ENCODE measurements at regions of chr11 and their contacts with region 1.

Region 1: GRCh38 chr11:46121724-46122477 is 647 bp upstream of the PHF21A start:
- DNase-seq: peak; percentile 30 to 87
- H3K4me3 ChIP-seq: peak overlapping the region; percentile 69 to 95
- H3K27ac ChIP-seq: peak overlapping the region; percentile 58 to 95
- H3K4me1 ChIP-seq: peaks cover 0 to 15% of the 10 kb centered on the region in 2 donors
- H3K27me3 ChIP-seq: no peaks in the 10 kb centered on the region
- CTCF ChIP-seq: no peak

Region 2: DNA sequence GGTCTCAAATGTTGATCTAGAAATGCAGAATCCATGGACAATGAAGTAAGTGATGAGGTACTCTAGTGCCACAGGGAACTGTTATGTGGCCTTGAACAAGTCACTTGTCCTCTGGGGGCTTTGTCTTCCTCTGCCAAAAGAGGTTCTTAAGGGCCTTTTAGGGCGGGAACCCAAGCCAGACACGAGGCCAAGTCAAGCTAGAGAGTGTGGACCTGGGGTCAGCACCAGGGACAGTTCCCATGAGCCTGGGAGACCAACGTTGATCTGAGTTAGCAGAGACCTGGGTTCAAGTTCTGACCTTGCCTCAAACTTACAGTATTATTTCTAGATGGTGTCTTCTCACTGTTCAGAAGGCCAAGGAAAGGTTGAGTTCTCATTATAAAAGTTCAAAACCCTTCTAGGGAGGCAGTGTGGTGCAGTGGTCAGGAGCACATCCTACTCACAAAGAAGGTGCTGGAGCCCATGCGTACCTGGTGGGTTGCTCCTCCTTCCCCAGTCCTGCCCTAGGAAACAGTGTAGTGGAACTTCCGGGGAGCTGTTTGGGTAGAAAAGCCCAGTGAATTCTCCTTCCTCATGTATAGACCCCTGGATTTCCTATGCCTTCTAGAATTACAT is 578.0 kb before region 1 on chr11:
- intact Hi-C with region 1: no loop called
- DNase-seq: no peak
- H3K4me3 ChIP-seq: no peak overlapping the region
- H3K27ac ChIP-seq: no peak overlapping the region
- H3K4me1 ChIP-seq: no peaks in the 10 kb centered on the region
- H3K27me3 ChIP-seq: no peaks in the 10 kb centered on the region
- CTCF ChIP-seq: no peak

Region 3: DNA sequence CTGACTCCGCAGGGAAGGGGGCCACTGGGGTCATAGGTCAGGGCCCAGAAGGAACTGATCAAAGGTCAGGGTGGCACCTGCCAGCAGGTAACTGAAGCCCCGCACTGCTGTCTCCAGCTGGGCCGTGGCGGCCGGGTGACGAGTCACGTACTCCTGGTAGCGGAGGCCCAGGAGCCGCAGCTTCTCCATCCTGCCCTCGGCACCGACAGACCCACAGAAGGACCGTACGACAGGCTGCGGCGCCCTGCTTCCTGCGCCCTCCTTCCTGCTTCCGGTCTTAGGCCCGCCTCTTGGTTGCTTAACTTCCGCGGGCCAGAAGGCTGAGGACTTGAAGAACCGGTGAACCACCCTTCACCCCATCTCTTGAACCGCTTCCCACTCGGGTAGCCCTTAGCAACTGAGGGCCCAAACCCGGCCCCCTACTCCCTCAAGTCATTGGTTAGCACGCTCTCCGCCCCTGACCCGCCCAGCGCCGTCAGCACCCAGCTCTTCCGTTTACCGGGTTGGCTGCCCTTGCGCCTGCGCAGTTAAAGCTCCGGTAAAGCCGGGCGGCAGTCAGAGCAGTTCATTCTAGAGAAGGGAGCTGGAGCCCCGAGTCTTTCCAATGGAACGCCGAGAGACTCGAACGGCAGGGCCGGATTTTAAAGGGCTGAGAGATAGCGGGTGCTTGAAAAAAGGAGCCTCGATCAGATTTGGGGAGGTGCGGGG is 204.1 kb before region 1 on chr11 and contains the start of gene PEX16:
- intact Hi-C with region 1: loop called (anchors 5 kb)
- DNase-seq: peak; percentile 93 to 99
- H3K4me3 ChIP-seq: peak within 1 kb of the TSS; percentile 67 to 91
- H3K27ac ChIP-seq: peak within 1 kb of the TSS; percentile 90 to 91
- H3K4me1 ChIP-seq: peaks cover 5 to 18% of the 10 kb centered on the region in 2 donors
- H3K27me3 ChIP-seq: peaks cover 11% of the 10 kb centered on the region
- CTCF ChIP-seq: no peak
- total RNA-seq, gene PEX16: 77.9 TPM

Region 4: GRCh38 chr11:45964911-45965389 is 157.0 kb before region 1 on chr11:
- intact Hi-C with region 1: loop called (anchors 10 kb)
- DNase-seq: peak in 1 of 2 donors; percentile 79
- H3K4me3 ChIP-seq: no peak overlapping the region
- H3K27ac ChIP-seq: peak overlapping the region; percentile 27 to 60
- H3K4me1 ChIP-seq: peaks cover 0 to 2% of the 10 kb centered on the region in 2 donors
- H3K27me3 ChIP-seq: no peaks in the 10 kb centered on the region
- CTCF ChIP-seq: peak; percentile 86 to 90 (median 90)

Region 5: DNA sequence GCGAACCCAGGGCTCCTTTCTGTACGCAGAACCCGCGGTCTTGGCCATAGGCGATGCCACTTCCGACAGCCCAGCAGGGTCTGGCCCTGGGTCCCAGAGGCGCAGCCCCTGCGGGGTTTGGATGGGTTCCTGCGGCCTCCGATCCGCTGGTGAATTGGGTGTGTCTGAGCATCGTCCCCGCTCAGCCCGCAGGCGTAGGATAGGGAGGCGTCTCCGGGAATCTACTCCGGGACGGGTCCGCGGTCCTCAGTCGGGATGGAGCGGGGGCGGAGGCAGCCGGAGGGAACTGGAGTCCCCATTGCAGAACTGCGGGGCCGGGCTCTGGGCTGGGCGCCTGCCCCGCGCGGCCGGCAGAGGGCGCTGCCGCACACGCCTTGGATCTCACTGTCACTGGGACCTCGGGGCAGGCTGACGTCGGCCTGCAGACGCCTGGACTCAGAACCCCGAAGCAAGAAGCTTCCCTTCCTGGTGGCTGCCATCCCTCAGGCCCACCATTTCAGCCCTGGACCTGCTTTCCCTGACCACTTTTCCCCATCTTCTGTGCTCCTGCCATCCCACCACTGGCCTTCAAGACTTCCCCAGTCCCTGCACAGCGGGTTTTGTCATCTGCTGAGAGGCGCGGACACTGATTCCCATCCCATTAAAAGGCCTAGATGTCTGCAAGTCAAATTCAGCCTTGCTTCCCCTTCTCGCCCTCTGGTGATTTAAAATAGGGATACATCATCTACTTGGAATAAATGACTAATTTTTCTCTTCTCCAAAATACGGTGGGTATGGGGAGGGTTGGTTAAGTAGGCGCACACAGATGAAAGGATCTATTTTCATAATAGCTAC is 117.3 kb after region 1 on chr11:
- intact Hi-C with region 1: loop called (anchors 5 kb)
- DNase-seq: peak; percentile 50 to 93
- H3K4me3 ChIP-seq: peak overlapping the region; percentile 60 to 86
- H3K27ac ChIP-seq: no peak overlapping the region
- H3K4me1 ChIP-seq: peaks cover 12 to 20% of the 10 kb centered on the region in 2 donors
- H3K27me3 ChIP-seq: no peaks in the 10 kb centered on the region
- CTCF ChIP-seq: peak; percentile 96 to 99 (median 98)

Region 6: DNA sequence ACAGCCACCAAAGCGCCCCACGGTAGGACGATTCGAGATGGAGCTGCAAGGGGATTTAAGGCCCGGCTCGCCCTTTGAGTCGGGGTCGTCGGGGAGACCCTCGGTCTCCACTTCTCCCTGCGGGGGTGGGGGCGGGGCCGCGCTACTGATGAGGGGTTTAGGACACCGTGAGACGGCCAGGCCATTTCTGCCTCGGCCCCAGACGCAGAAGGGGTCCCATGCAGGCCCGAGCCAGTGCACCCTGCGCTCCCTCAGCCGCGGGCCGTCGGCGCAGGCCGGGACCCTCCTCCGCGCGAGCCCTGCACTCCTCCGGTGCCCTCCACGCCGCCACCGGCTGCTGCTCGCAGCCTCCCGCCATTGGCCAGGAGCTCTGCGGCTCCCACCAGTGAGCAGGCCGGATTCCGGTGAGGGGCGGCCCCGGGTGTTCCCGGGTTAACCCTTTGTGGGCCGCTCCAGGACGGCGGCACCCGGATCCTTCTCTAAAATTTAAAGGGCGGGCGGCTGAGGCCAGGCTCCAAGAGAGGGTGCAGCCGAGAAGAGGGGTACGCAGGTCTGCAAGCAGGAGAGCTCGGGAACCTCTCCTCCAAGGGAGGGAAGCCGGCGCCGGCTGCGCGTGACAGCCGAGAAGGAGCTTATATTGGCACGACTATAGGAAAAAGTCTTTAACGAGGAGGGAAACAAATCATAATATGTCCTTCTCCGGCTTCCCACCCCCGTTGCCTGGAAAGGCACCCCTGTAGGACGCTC is 173.6 kb after region 1 on chr11:
- intact Hi-C with region 1: loop called (anchors 10 kb)
- DNase-seq: peak in 1 of 2 donors; percentile 84
- H3K4me3 ChIP-seq: peak overlapping the region; percentile 52 to 77
- H3K27ac ChIP-seq: no peak overlapping the region
- H3K4me1 ChIP-seq: peaks cover 7 to 27% of the 10 kb centered on the region in 2 donors
- H3K27me3 ChIP-seq: no peaks in the 10 kb centered on the region
- CTCF ChIP-seq: no peak

Region 7: DNA sequence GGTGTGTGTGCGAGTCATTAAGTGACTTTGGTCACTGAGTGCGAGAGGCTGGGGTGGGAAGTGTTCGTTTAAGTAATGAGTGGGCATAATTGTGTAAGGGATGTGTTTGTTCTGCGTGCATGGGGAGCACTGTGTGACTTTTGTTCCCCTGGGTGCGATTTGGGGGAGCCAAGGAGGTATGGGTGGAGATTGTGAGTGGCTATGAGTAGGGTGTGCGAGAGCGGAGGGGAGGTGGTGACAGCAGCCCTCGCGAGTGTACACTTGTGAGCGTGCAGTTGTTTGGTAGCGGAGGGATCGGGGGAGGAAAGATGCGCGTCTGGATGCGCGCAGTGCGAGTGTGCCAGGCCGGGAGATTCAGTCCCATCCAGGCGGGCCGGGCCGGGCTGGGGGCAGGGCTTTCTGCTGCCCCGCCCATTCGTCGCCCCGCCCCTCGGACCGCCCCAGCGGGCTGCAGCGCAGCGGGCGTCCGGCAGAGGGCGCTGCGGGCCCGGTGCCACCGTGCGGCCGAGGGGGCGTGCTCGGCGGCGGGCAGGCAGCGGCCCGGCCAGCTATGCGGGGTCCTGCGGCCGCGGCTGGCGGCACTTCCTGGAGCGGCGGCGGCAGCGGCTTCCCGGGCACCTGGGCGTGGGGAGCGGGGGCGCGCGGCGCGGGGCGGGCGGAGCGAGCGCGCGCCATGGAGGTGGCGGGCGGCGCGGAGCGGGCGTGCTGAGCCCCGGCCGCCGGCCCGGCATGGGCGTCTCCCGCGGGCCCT is 225.2 kb after region 1 on chr11 and contains the start of gene DGKZ:
- intact Hi-C with region 1: loop called (anchors 5 kb)
- DNase-seq: peak; percentile 47 to 92
- H3K4me3 ChIP-seq: peak within 1 kb of the TSS; percentile 73 to 96
- H3K27ac ChIP-seq: peak within 1 kb of the TSS in 1 of 2 donors; percentile 37
- H3K4me1 ChIP-seq: peaks cover 9 to 14% of the 10 kb centered on the region in 2 donors
- H3K27me3 ChIP-seq: no peaks in the 10 kb centered on the region
- CTCF ChIP-seq: peak; percentile 43 to 100 (median 59)
- total RNA-seq, gene DGKZ: 123 TPM